Activated naive CD4-positive, alpha-beta T cell treated with anti-CD3 and anti-CD28 coated beads for 36 hours (primary cell): ENCODE measurements at regions of chr5 and their contacts with region 1.

Region 1: GRCh38 chr5:178732281-178732680 is 1.8 kb upstream of the ZNF354A start:
- DNase-seq: no peak
- H3K4me3 Mint-ChIP-seq: no peak overlapping the region
- H3K27ac Mint-ChIP-seq: no peak overlapping the region
- H3K4me1 Mint-ChIP-seq: peaks cover 13% of the 10 kb centered on the region
- H3K27me3 Mint-ChIP-seq: no peaks in the 10 kb centered on the region

Region 2: GRCh38 chr5:178232124-178232919 is 500.0 kb before region 1 on chr5 and contains the start of gene PHYKPL:
- CTCF ChIA-PET with region 1: no interaction called
- intact Hi-C with region 1: loop called (anchors 5 kb)
- DNase-seq: peak; percentile 63
- H3K4me3 Mint-ChIP-seq: peak within 1 kb of the TSS; percentile 86
- H3K27ac Mint-ChIP-seq: peak within 1 kb of the TSS; percentile 80
- H3K4me1 Mint-ChIP-seq: peaks cover 55% of the 10 kb centered on the region
- H3K27me3 Mint-ChIP-seq: no peaks in the 10 kb centered on the region
- total RNA-seq, gene PHYKPL: 50.9 to 51.2 TPM

Region 3: DNA sequence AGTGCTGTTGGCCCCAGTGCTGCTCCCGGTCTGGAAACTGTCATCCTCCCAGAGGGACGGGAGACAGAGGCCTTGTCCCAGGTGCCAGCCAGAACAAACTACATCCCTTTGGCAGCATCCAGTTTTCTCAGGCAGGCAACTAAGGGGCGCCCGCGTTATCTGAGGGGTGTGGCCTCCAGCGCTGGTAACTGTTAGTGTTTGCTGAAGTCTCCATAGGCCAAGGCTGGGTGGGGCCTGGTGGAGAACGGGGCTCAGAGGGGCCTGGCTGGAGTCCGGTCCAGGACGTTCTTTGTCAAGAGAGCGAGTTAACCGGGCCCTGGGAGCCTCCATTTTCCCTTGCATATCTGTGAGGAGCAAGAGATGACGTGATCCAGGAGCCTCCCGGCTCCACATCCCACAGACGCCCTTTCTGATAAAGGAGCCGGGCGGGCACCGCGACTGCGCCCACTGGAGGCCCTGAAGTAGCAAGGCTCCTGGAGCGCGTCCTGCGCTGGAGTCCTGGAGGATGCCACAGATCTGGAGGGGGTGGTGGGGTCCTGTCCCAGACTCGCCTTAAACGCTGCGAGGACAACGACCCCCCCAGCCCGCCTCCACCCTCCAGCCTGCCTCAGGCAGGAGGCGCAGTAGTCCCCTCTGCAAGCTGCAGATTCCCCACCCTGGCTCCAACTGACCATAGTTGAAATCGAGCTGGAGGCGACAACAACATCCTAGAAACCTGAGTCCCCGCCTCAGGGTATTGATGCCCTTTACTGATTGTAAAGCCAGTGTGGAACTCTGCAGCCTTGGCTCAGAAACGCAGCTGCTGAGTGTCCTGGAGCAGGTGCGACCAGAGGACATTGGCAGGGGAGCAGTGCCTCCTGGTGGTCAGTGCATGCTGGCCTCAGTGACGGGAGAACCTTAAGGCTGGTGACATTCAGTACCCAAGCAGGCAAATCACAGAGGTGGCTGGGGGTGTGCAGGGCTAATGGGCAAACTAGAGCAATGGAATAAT is 106.7 kb after region 1 on chr5:
- CTCF ChIA-PET with region 1: no interaction called
- intact Hi-C with region 1: loop called (anchors 1 kb)
- DNase-seq: peak; percentile 74
- H3K4me3 Mint-ChIP-seq: no peak overlapping the region
- H3K27ac Mint-ChIP-seq: no peak overlapping the region
- H3K4me1 Mint-ChIP-seq: no peaks in the 10 kb centered on the region
- H3K27me3 Mint-ChIP-seq: no peaks in the 10 kb centered on the region

Region 4: DNA sequence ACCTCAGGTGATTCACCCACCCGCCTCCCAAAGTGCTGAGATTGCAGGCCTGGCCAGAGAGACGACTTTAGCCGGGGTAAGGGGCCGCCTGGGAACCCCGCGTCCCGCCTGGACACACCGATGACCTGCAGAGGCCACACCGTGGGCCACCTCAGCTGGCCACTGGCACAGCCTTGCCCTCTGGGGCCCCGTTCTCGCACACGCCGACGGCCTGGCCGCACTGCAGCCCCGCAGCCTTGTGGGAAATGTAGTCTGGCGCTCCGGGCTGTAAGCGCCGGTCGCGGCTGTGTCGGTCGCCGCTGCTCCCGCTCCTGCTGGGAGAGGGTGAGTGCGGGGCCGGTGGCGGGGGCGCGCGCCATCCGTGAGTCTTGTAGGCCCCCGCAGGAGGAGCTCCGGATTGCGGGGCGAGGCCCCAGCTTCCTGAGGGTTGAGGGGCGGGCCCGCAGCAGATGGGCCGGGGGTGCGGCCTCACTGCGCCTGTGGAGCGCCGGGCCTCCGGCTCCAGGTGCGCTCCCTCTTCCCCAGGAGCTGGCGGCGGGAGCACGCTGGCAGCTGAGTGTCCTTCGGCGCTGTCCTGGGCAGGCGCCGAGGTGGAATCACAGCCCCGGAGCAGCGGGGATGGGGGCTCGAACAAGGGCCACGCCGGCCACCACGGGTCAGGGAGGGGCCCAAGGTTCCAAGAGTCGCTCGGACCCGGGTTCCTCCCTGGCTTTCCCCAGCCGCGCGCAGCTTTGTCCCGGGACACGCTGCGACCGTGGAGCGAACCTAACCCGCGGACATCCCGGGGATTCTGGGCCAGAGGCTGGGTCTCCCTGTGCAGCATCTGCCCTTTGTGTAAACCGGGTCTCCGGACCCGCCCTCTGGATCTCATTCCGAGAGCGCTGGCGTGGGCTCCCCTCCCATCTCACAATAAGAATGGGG is 163.6 kb after region 1 on chr5 and contains the start of gene ZFP2:
- CTCF ChIA-PET with region 1: no interaction called
- intact Hi-C with region 1: loop called (anchors 2 kb)
- DNase-seq: peak; percentile 48
- H3K4me3 Mint-ChIP-seq: peak within 1 kb of the TSS; percentile 71
- H3K27ac Mint-ChIP-seq: no peak within 1 kb of the TSS
- H3K4me1 Mint-ChIP-seq: peaks cover 5% of the 10 kb centered on the region
- H3K27me3 Mint-ChIP-seq: no peaks in the 10 kb centered on the region
- total RNA-seq, gene ZFP2: 0.17 to 0.26 TPM

Region 5: DNA sequence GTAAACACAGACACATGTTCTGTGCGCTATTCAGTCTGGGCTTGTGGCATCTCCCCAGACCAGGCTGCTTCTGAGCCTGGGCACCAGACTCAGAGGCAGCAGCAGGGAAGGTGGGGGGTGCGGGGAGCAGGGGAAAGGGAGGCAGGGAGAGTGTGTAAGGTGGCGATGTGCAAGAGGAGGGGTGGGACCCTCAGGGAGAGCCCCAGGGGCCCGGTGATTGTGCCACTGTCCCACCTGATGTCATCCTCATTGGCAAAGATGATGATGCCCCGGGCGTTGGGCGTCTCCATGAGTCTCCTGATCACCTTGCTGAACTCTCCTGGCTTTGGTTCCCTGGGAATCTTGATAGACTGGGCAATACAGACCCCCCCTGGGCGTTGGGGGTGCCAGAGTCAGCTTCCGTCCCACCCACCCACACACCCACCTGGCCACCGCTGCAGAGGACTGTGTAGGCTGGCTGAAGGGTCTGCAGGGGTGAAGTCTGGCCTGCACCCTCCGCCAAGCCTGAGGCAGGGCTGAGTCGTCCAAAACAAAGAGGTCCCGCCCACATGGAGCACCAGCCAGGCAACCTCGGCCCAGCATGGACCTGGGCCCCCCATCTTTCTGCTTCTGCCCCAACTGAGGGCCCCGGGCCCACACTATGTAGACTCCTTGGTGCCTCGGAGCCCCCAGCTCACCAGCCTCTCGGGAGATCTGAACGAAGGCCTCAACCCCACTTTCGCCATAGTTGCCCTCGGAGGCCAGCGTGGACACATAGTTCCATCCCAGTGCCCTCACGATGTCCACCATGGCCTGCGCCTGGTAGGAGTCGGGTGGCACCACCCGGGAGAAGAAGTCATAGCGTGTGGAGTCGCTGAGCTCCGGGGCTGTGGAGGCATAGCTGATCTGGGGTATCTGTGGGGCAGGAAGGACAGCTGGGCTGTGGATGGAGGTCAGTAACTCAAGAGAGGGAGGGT is 259.2 kb after region 1 on chr5:
- CTCF ChIA-PET with region 1: no interaction called
- intact Hi-C with region 1: no loop called
- DNase-seq: no peak
- H3K4me3 Mint-ChIP-seq: no peak overlapping the region
- H3K27ac Mint-ChIP-seq: no peak overlapping the region
- H3K4me1 Mint-ChIP-seq: peaks cover 11% of the 10 kb centered on the region
- H3K27me3 Mint-ChIP-seq: peaks cover 30% of the 10 kb centered on the region

Region 6: DNA sequence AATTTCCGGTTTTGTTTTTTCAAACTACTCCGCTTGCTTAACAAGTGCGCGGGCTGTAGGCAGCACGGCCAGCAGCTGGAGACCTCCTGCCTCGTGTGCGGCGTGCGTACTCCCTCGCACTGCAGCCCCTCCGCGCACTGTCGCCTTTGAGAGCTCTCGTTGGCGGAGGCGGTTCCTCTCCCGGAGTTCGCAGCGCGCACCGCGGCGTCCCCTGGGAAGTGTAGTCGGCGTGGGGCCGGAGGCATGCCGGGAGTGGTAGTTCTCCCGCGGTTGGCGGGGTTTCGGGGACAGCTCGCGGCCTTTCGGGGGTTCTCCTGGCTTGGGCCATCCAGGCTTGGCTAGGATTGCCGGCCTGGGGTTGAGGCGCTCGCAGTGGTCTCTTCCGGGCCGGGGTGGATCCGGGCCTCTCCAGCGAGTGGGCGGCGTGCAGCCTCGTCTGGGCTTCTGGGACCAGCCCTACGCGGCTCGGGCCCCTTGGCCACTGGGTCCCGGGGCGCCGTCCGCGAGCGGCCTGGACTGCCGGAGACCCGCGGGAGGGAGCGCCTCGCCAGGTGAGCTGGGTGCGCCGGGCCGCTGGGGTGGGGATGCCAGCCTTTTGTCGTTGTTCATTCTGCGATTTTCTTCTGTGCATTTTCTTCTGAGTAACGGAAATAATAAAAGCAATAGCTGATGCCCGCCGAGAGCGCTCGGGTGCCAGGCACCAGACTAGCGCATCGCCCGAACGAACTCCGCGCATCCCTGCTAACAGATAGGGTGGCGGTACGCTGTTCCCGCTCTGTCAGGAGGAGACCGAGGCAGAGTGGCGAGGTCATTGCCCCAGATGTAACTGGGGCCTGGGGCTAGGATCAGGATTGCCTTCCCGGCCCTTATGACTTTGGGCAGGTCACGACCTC is 328.1 kb after region 1 on chr5 and contains the start of gene ZNF354C:
- CTCF ChIA-PET with region 1: interaction called, 3 read pairs
- intact Hi-C with region 1: loop called (anchors 1 kb)
- DNase-seq: peak; percentile 90
- H3K4me3 Mint-ChIP-seq: peak within 1 kb of the TSS; percentile 87
- H3K27ac Mint-ChIP-seq: peak within 1 kb of the TSS; percentile 81
- H3K4me1 Mint-ChIP-seq: peaks cover 15% of the 10 kb centered on the region
- H3K27me3 Mint-ChIP-seq: no peaks in the 10 kb centered on the region
- total RNA-seq, gene ZNF354C: 5.8 to 6.1 TPM

Region 7: GRCh38 chr5:179495906-179496455 is 763.7 kb after region 1 on chr5:
- CTCF ChIA-PET with region 1: no interaction called
- intact Hi-C with region 1: loop called (anchors 1 kb)
- DNase-seq: peak; percentile 20
- H3K4me3 Mint-ChIP-seq: no peak overlapping the region
- H3K27ac Mint-ChIP-seq: no peak overlapping the region
- H3K4me1 Mint-ChIP-seq: no peaks in the 10 kb centered on the region
- H3K27me3 Mint-ChIP-seq: no peaks in the 10 kb centered on the region